ENCODE measurements at regions of chr14 and their contacts with region 1.

Region 1: GRCh38 chr14:95561001-95561412 is 26.2 kb downstream of the GLRX5 start:
- DNase-seq: peak; percentile 17
- H3K4me3 ChIP-seq: no peak overlapping the region
- H3K27me3 ChIP-seq: no peaks in the 10 kb centered on the region
- CTCF ChIP-seq: peak; percentile 89

Region 2: GRCh38 chr14:95545179-95546168 is 15.5 kb before region 1 on chr14:
- CTCF ChIA-PET with region 1: interaction called, 19 read pairs
- POLR2A ChIA-PET with region 1: no interaction called
- DNase-seq: peak; percentile 61
- H3K4me3 ChIP-seq: no peak overlapping the region
- H3K27me3 ChIP-seq: no peaks in the 10 kb centered on the region
- CTCF ChIP-seq: no peak

Measured in BJ (cell line).